Calu3 (cell line): ENCODE measurements at regions of chr14 and their contacts with region 1.

Region 1: DNA sequence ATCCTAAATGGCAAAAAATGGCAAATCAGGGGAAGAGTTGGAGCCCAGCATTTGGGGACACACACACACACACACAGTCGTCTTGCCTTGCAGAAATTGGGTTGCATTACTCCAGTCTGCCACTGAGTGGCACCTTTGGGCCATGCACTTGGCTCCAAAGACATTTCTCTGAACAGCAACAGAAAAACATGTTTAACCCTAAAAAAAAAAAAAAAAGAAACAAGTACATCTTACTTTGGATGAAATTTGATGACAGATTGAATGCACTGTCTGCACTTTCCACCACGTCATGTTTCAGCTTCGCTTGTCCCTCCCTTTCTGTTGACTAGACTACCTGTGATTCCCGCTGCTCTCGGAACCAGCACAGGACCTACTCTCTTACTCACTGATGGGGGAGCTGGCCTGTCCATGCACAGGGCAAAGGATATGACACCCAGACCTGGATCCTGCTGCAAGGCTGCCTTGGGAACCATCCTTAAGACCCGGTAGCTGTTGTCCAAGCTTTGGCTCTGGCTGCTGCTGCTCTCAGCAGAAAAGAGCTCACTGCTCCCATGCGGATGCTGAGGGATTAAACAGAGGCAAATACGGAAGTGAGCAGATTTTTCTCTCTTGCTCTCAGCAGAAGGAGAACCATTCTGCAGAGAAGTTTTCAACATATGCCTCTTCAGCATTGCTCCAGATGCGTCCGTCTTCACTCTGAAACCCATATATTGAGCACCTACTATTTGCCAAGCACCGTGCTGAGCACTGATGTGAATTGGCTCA is 376.8 kb downstream of the DPF3 start:
- DNase-seq: peak; percentile 70
- H3K4me3 Mint-ChIP-seq: no peak overlapping the region
- H3K27ac Mint-ChIP-seq: no peak overlapping the region
- H3K4me1 Mint-ChIP-seq: no peaks in the 10 kb centered on the region
- H3K27me3 Mint-ChIP-seq: peaks cover 5% of the 10 kb centered on the region
- CTCF ChIP-seq: peak; percentile 86

Region 2: GRCh38 chr14:72781476-72782181 is 264.5 kb after region 1 on chr14:
- CTCF ChIA-PET with region 1: interaction called, 3 read pairs
- intact Hi-C with region 1: loop called (anchors 5 kb)
- DNase-seq: peak; percentile 75
- H3K4me3 Mint-ChIP-seq: no peak overlapping the region
- H3K27ac Mint-ChIP-seq: peak overlapping the region; percentile 49
- H3K4me1 Mint-ChIP-seq: peaks cover 54% of the 10 kb centered on the region
- H3K27me3 Mint-ChIP-seq: no peaks in the 10 kb centered on the region
- CTCF ChIP-seq: no peak

Region 3: GRCh38 chr14:72904840-72905561 is 387.9 kb after region 1 on chr14:
- CTCF ChIA-PET with region 1: interaction called, 17 read pairs
- intact Hi-C with region 1: loop called (anchors 1 kb)
- DNase-seq: peak; percentile 63
- H3K4me3 Mint-ChIP-seq: no peak overlapping the region
- H3K27ac Mint-ChIP-seq: no peak overlapping the region
- H3K4me1 Mint-ChIP-seq: peaks cover 32% of the 10 kb centered on the region
- H3K27me3 Mint-ChIP-seq: no peaks in the 10 kb centered on the region
- CTCF ChIP-seq: peak; percentile 60

Region 4: DNA sequence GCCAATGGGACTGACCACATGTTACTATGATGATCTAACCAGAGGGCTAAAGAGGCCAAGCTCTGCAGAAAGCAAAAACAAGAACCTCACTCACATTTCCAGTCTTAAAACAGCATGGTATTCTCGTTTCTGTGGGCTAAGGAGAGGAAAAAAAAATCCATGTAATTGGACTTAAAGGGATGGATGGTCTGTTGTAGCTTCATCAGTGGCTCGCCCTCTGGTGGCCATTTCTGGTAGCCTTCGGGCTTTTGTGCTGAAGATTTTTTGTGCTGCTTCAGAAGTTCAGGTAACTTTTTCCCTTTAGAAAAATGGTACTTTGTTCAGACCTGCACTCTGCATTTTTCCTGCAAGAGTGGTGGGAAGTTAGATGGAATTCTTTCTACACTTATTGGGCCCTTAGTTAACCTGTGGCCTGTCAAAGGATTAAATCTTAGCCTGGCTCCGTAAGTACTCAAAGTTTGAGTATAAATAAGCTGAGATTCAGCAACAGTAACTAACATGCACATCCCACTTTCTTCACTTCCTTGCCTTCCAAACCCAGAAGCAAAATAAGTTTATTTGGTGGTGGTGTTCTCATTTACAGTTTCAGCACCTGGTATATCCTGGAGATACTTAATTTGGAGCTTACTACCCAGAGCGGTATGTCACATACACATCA is 431.5 kb after region 1 on chr14:
- CTCF ChIA-PET with region 1: interaction called, 22 read pairs
- intact Hi-C with region 1: loop called (anchors 1 kb)
- DNase-seq: peak; percentile 71
- H3K4me3 Mint-ChIP-seq: no peak overlapping the region
- H3K27ac Mint-ChIP-seq: no peak overlapping the region
- H3K4me1 Mint-ChIP-seq: no peaks in the 10 kb centered on the region
- H3K27me3 Mint-ChIP-seq: no peaks in the 10 kb centered on the region
- CTCF ChIP-seq: peak; percentile 79